Gastrocnemius medialis (tissue), 4 donors: ENCODE measurements at regions of chr4 and their contacts with region 1.

Region 1: DNA sequence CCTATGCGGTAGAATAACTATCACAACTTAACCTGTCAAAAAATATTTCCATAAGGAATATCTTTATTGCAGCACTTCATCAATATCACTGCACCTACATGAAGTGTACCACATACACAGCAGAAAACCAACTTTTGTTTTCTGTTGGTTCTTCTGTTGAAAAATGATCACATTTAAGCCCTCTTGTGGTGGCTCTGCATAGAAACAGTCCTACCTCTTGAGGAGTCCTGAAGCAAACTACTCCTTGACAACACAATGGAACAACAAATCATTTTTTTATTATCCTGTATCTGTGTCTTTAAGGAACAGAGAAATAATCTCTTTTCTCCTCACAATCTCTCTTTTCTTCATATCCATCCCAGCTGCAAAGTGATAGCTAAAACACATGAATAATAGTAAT is 39.8 kb upstream of the ATOH1 start:
- DNase-seq: no peak
- ATAC-seq: no peak
- H3K4me3 ChIP-seq: no peak overlapping the region
- H3K27ac ChIP-seq: no peak overlapping the region
- H3K4me1 ChIP-seq: no peaks in the 10 kb centered on the region
- H3K27me3 ChIP-seq: no peaks in the 10 kb centered on the region
- CTCF ChIP-seq: no peak
- POLR2A ChIP-seq: no peak

Region 2: DNA sequence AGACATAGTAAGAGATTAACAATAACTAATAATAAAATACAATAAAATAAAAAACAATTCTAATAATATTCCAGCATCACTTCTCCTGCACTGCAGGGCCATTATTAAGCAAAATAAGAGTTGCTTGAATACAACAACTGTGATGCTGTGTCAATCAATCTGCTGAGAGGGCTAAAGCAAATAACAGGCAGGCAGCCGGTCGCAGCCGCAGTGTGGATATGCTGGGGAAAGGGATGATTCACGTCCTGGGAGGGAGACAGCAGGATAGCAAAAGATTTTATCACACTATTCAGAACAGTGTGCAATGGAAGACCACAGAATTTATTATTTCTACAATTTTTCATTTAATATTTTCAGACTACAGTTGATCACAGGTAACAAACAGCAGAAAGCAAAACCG is 342.5 kb after region 1 on chr4:
- in situ Hi-C with region 1: loop called in 1 of 4 experiments (anchors 10 kb)
- intact Hi-C with region 1: no loop called
- DNase-seq: no peak
- ATAC-seq: no peak
- H3K4me3 ChIP-seq: no peak overlapping the region
- H3K27ac ChIP-seq: no peak overlapping the region
- H3K4me1 ChIP-seq: no peaks in the 10 kb centered on the region
- H3K27me3 ChIP-seq: no peaks in the 10 kb centered on the region
- CTCF ChIP-seq: no peak
- POLR2A ChIP-seq: no peak